Activated naive CD4-positive, alpha-beta T cell treated with anti-CD3 and anti-CD28 coated beads for 36 hours (primary cell): ENCODE measurements at regions of chr7 and their contacts with region 1.

Region 1: GRCh38 chr7:44307301-44307900 is 18.0 kb downstream of the CAMK2B start:
- DNase-seq: peak; percentile 63
- H3K4me3 Mint-ChIP-seq: no peak overlapping the region
- H3K27ac Mint-ChIP-seq: no peak overlapping the region
- H3K4me1 Mint-ChIP-seq: peaks cover 3% of the 10 kb centered on the region
- H3K27me3 Mint-ChIP-seq: peaks cover 8% of the 10 kb centered on the region

Region 2: DNA sequence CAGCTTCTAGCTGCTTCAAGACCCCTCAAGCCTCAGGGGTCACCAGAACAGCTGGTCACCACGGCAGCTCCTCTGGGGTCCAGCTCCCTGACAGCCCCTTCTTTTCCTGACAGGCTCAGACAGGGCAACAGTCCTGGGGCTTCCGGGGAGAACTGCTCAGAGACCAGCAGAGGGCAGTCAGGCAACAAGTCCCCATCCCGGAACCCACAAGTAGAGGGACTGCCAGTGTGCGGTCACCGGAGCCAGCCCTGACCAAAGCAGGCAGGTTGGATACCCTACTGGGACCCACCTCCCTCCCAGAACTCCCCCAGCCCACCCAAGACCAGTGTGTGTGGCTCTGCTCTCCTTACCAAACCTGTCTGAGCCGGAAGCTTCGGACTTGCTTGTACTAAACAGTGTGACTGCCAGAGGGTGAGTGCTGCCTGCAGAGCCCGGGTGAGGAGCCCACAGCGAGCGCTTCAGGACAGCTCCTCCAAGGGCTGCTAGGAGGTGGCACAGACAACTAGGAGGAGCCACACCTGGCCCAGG is 66.4 kb before region 1 on chr7:
- CTCF ChIA-PET with region 1: interaction called, 29 read pairs
- intact Hi-C with region 1: loop called (anchors 1 kb)
- DNase-seq: peak; percentile 82
- H3K4me3 Mint-ChIP-seq: no peak overlapping the region
- H3K27ac Mint-ChIP-seq: peak overlapping the region; percentile 30
- H3K4me1 Mint-ChIP-seq: no peaks in the 10 kb centered on the region
- H3K27me3 Mint-ChIP-seq: no peaks in the 10 kb centered on the region

Region 3: DNA sequence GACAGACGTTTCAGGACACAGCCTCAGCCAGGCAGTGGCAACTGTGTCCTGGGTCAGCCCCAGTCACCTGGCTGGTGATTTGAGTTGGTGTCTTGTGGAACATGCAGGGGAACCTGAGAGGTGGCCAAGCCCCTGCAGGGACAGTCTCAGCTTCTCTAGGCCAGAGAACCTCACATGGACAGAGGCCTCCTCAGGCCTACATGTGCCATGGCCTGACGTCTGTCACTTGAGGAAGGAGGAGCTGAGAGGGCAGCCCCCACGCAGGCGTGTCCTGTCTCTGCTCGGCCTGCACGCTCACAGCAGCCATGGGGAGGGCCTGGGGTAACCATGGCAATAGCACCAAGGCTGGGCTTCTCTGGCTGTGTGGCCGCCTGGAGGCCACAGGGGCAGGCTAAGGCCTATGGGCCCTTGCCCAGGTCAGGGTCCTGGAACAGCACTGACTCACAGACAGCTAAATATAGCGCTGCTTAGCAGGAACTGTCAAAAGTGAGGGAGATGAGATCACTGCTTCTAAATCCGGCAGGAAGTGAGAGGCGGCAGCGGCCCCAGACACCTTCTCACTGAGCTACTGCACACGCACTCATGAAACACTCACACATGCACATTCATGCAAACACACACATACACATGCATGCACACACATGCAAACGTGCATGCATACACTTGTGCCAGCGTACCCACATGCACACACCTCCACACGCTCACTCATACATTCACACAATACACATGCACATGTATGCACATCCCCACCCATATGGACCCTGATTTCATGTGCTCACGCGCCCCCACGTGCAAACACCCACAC is 49.6 kb before region 1 on chr7:
- CTCF ChIA-PET with region 1: interaction called, 4 read pairs
- intact Hi-C with region 1: loop called (anchors 1 kb)
- DNase-seq: peak; percentile 90
- H3K4me3 Mint-ChIP-seq: peak overlapping the region; percentile 17
- H3K27ac Mint-ChIP-seq: peak overlapping the region; percentile 94
- H3K4me1 Mint-ChIP-seq: peaks cover 29% of the 10 kb centered on the region
- H3K27me3 Mint-ChIP-seq: no peaks in the 10 kb centered on the region

Region 4: GRCh38 chr7:44685723-44686122 is 378.3 kb after region 1 on chr7:
- CTCF ChIA-PET with region 1: no interaction called
- intact Hi-C with region 1: no loop called
- DNase-seq: no peak
- H3K4me3 Mint-ChIP-seq: no peak overlapping the region
- H3K27ac Mint-ChIP-seq: no peak overlapping the region
- H3K4me1 Mint-ChIP-seq: peaks cover 7% of the 10 kb centered on the region
- H3K27me3 Mint-ChIP-seq: no peaks in the 10 kb centered on the region